Activated naive CD4-positive, alpha-beta T cell treated with anti-CD3 and anti-CD28 coated beads for 36 hours (primary cell): ENCODE measurements at regions of chr7 and their contacts with region 1.

Region 1: GRCh38 chr7:102390697-102391484 is 5.3 kb upstream of the PRKRIP1 start:
- DNase-seq: peak; percentile 77
- H3K4me3 Mint-ChIP-seq: no peak overlapping the region
- H3K27ac Mint-ChIP-seq: no peak overlapping the region
- H3K4me1 Mint-ChIP-seq: peaks cover 5% of the 10 kb centered on the region
- H3K27me3 Mint-ChIP-seq: no peaks in the 10 kb centered on the region

Region 2: GRCh38 chr7:101315336-101315735 is 1075.6 kb before region 1 on chr7:
- CTCF ChIA-PET with region 1: no interaction called
- intact Hi-C with region 1: no loop called
- DNase-seq: peak; percentile 74
- H3K4me3 Mint-ChIP-seq: no peak overlapping the region
- H3K27ac Mint-ChIP-seq: no peak overlapping the region
- H3K4me1 Mint-ChIP-seq: peaks cover 1% of the 10 kb centered on the region
- H3K27me3 Mint-ChIP-seq: no peaks in the 10 kb centered on the region

Region 3: DNA sequence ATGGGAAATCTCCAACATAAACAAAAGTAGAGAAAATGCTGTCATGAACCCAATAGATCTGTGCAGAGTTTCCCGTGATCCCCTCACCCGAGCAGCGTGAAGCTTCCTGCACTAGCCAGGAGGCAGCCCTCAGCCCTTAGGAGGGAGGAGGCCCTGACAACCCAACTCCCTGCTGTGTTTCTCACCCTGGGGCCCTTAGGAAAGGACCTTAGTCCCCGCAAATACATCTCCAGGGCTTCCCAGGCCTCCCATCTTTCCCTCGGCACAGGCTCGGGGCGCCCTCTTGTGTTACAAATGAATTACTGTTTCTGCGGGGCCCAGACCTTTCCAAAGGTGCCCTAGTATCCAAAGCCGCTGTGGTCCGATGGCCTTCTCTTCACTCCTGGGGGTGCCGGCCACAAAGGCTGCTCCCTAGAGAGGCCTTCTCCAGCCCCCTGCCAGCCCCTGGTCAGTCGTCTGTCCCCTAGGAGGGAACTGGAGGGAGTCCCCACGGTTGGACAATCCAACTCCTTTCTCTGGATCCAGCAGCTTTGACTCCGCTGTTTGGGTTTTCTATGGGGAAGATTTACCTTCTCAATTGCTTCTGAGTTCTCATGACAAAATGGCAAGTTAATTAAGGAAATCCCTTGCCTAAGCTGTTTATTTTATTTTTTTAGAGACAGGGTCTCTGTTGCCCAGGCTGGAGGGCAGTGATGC is 154.2 kb before region 1 on chr7:
- CTCF ChIA-PET with region 1: no interaction called
- intact Hi-C with region 1: no loop called
- DNase-seq: peak; percentile 67
- H3K4me3 Mint-ChIP-seq: no peak overlapping the region
- H3K27ac Mint-ChIP-seq: no peak overlapping the region
- H3K4me1 Mint-ChIP-seq: no peaks in the 10 kb centered on the region
- H3K27me3 Mint-ChIP-seq: no peaks in the 10 kb centered on the region

Region 4: GRCh38 chr7:102279537-102280400 is 111.1 kb before region 1 on chr7:
- CTCF ChIA-PET with region 1: interaction called, 16 read pairs
- intact Hi-C with region 1: loop called (anchors 1 kb)
- DNase-seq: peak; percentile 70
- H3K4me3 Mint-ChIP-seq: no peak overlapping the region
- H3K27ac Mint-ChIP-seq: no peak overlapping the region
- H3K4me1 Mint-ChIP-seq: peaks cover 13% of the 10 kb centered on the region
- H3K27me3 Mint-ChIP-seq: peaks cover 4% of the 10 kb centered on the region

Region 5: GRCh38 chr7:102286237-102287110 is 104.4 kb before region 1 on chr7 and contains the start of gene SH2B2:
- CTCF ChIA-PET with region 1: interaction called, 4 read pairs
- intact Hi-C with region 1: loop called (anchors 1 kb)
- DNase-seq: peak; percentile 56
- H3K4me3 Mint-ChIP-seq: peak within 1 kb of the TSS; percentile 64
- H3K27ac Mint-ChIP-seq: no peak within 1 kb of the TSS
- H3K4me1 Mint-ChIP-seq: peaks cover 28% of the 10 kb centered on the region
- H3K27me3 Mint-ChIP-seq: peaks cover 10% of the 10 kb centered on the region
- total RNA-seq, gene SH2B2: 1.4 TPM